Naive thymus-derived CD4-positive, alpha-beta T cell (primary cell): ENCODE measurements at regions of chr12 and their contacts with region 1.

Region 1: GRCh38 chr12:53295070-53295890 is at the start of gene PFDN5:
- DNase-seq: peak; percentile 71 to 94 (median 88)
- ATAC-seq: peak; percentile 95
- H3K4me3 ChIP-seq: peak within 1 kb of the TSS; percentile 85
- H3K4me3 Mint-ChIP-seq: peak within 1 kb of the TSS; percentile 91 to 100 (median 98)
- H3K27ac ChIP-seq: peak within 1 kb of the TSS; percentile 94
- H3K27ac Mint-ChIP-seq: peak within 1 kb of the TSS; percentile 96 to 99 (median 98)
- H3K4me1 ChIP-seq: peaks cover 24 to 28% of the 10 kb centered on the region in 2 donors
- H3K4me1 Mint-ChIP-seq: peaks cover 27 to 62% (median 37%) of the 10 kb centered on the region in 7 donors
- H3K27me3 ChIP-seq: no peaks in the 10 kb centered on the region
- H3K27me3 Mint-ChIP-seq: no peaks in the 10 kb centered on the region
- total RNA-seq, gene PFDN5: 323 to 785 (median 692) TPM

Region 2: DNA sequence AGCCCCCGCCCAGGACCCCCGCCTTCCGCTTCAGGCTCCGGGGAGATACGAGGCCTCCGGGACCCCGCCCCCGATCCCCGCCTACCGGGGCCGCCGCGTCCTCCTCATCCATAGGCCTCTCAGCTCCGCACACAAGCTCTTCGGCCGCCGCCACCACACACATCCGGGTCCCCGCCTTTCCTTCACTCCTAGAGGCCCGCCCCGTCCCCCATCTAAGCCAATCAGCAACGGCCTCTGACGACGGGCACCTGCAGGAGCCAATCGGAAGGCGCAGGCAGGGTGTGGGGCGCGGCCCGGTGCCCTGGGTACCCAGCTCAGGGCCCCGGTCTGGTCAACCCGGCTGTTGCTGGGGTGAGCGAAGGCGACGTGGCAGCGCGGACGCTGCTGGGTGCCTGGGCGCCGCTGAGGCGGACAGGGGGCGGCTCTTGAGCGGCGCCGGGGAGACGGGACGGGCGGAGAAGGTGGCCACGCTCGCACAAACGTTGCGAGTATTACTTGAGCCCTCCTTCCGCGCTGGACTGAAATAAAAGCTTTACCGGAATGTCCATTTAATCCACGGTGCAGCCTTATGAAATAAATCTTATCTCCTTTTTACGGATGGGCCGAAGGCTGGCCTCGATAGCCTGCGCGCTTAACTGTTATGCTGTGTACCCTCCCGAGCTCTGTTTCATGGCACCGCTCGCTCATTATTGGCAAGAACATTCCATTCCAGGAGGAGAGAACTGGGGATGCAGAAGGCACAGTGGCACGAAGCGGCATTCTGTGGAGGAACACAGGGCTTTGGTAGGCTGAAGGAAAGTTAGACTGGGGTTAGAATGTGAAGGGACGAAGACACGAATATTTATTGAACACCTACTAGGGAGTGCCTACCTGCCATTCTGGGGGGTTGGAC is 215.8 kb before region 1 on chr12 and contains the start of gene SPRYD3:
- CTCF ChIA-PET with region 1: no interaction called
- POLR2A ChIA-PET with region 1: interaction called, 6 read pairs
- intact Hi-C with region 1: loop called in 1 of 2 experiments (anchors 2 kb)
- DNase-seq: peak; percentile 96 to 99 (median 97)
- ATAC-seq: peak; percentile 99
- H3K4me3 ChIP-seq: peak within 1 kb of the TSS; percentile 95
- H3K4me3 Mint-ChIP-seq: peak within 1 kb of the TSS; percentile 90 to 98 (median 92)
- H3K27ac ChIP-seq: peak within 1 kb of the TSS; percentile 93
- H3K27ac Mint-ChIP-seq: peak within 1 kb of the TSS; percentile 95 to 98 (median 96)
- H3K4me1 ChIP-seq: peaks cover 10 to 14% of the 10 kb centered on the region in 2 donors
- H3K4me1 Mint-ChIP-seq: peaks cover 26 to 53% (median 40%) of the 10 kb centered on the region in 7 donors
- H3K27me3 ChIP-seq: no peaks in the 10 kb centered on the region
- H3K27me3 Mint-ChIP-seq: peaks cover 0 to 3% (median 0%) of the 10 kb centered on the region in 5 donors
- total RNA-seq, gene SPRYD3: 33.0 to 48.0 (median 36.4) TPM

Region 3: DNA sequence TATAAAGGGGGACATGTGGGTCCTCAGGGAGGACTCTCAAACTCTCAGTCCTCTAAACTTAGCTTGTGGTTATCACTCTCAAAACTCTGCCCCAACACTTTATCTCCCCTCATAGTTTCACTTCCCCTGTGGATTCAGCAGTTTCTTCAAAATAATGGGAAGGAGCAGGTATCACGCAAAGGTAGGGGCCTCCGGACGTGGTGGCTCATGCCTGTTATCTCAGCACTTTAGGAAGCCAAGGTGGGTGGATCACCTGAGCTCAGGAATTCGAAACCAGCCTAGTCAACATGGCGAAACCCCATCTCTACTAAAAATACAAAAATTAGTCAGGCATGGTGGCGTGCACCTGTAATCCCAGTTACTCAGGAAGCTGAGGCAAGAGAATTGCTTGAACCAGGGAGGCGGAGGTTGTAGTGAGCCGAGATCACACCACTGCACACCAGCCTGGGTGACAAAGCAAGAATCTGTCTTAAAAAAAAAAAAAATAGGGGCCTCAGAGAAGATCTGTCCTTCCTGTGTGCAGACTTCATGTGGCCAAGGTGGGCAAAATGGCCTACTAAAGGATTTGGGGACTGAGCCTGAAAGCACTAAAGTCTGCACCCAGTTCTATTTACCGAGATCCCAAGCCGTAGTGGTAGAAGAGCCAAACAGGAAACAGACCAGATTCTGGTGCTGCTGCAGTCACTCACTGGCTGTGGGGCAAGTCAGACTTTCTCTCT is 94.7 kb before region 1 on chr12:
- CTCF ChIA-PET with region 1: no interaction called
- POLR2A ChIA-PET with region 1: interaction called, 17 read pairs
- intact Hi-C with region 1: no loop called
- DNase-seq: peak in 4 of 9 donors; percentile 41 to 46 (median 42)
- ATAC-seq: peak; percentile 29
- H3K4me3 ChIP-seq: peak overlapping the region; percentile 21
- H3K4me3 Mint-ChIP-seq: peak overlapping the region; percentile 65 to 90 (median 76)
- H3K27ac ChIP-seq: peak overlapping the region; percentile 75
- H3K27ac Mint-ChIP-seq: peak overlapping the region; percentile 82 to 95 (median 92)
- H3K4me1 ChIP-seq: peaks cover 70 to 94% of the 10 kb centered on the region in 2 donors
- H3K4me1 Mint-ChIP-seq: peaks cover 56 to 91% (median 74%) of the 10 kb centered on the region in 7 donors
- H3K27me3 ChIP-seq: no peaks in the 10 kb centered on the region
- H3K27me3 Mint-ChIP-seq: no peaks in the 10 kb centered on the region

Region 4: GRCh38 chr12:53251477-53252348 is 43.6 kb before region 1 on chr12:
- CTCF ChIA-PET with region 1: no interaction called
- POLR2A ChIA-PET with region 1: interaction called, 3 read pairs
- intact Hi-C with region 1: loop called in 1 of 2 experiments (anchors 1 kb)
- DNase-seq: peak; percentile 58 to 81 (median 69)
- ATAC-seq: peak; percentile 90
- H3K4me3 ChIP-seq: peak overlapping the region; percentile 95
- H3K4me3 Mint-ChIP-seq: peak overlapping the region; percentile 89 to 98 (median 96)
- H3K27ac ChIP-seq: peak overlapping the region; percentile 95
- H3K27ac Mint-ChIP-seq: peak overlapping the region; percentile 84 to 97 (median 94)
- H3K4me1 ChIP-seq: peaks cover 26 to 38% of the 10 kb centered on the region in 2 donors
- H3K4me1 Mint-ChIP-seq: peaks cover 37 to 59% (median 48%) of the 10 kb centered on the region in 7 donors
- H3K27me3 ChIP-seq: no peaks in the 10 kb centered on the region
- H3K27me3 Mint-ChIP-seq: no peaks in the 10 kb centered on the region

Region 5: GRCh38 chr12:53344824-53345485 is 49.7 kb after region 1 on chr12:
- CTCF ChIA-PET with region 1: interaction called, 4 read pairs
- POLR2A ChIA-PET with region 1: no interaction called
- intact Hi-C with region 1: loop called (anchors 1 to 2 kb)
- DNase-seq: peak; percentile 42 to 68 (median 63)
- ATAC-seq: peak; percentile 89
- H3K4me3 ChIP-seq: peak overlapping the region; percentile 79
- H3K4me3 Mint-ChIP-seq: peak overlapping the region; percentile 91 to 100 (median 97)
- H3K27ac ChIP-seq: peak overlapping the region; percentile 66
- H3K27ac Mint-ChIP-seq: peak overlapping the region; percentile 87 to 96 (median 91)
- H3K4me1 ChIP-seq: peaks cover 0 to 10% of the 10 kb centered on the region in 2 donors
- H3K4me1 Mint-ChIP-seq: peaks cover 11 to 25% (median 17%) of the 10 kb centered on the region in 7 donors
- H3K27me3 ChIP-seq: no peaks in the 10 kb centered on the region
- H3K27me3 Mint-ChIP-seq: peaks cover 0 to 13% (median 0%) of the 10 kb centered on the region in 5 donors

Region 6: GRCh38 chr12:53500776-53501614 is 205.7 kb after region 1 on chr12 and contains the start of gene TARBP2:
- CTCF ChIA-PET with region 1: interaction called, 4 read pairs
- POLR2A ChIA-PET with region 1: interaction called, 13 read pairs
- intact Hi-C with region 1: loop called (anchors 1 kb)
- DNase-seq: peak; percentile 87 to 99 (median 98)
- ATAC-seq: peak; percentile 87
- H3K4me3 ChIP-seq: peak within 1 kb of the TSS; percentile 84
- H3K4me3 Mint-ChIP-seq: peak within 1 kb of the TSS; percentile 86 to 96 (median 92)
- H3K27ac ChIP-seq: peak within 1 kb of the TSS; percentile 98
- H3K27ac Mint-ChIP-seq: peak within 1 kb of the TSS; percentile 87 to 100 (median 97)
- H3K4me1 ChIP-seq: peaks cover 24 to 27% of the 10 kb centered on the region in 2 donors
- H3K4me1 Mint-ChIP-seq: peaks cover 15 to 56% (median 43%) of the 10 kb centered on the region in 7 donors
- H3K27me3 ChIP-seq: no peaks in the 10 kb centered on the region
- H3K27me3 Mint-ChIP-seq: no peaks in the 10 kb centered on the region
- total RNA-seq, gene TARBP2: 25.1 to 45.2 (median 40.7) TPM

Region 7: DNA sequence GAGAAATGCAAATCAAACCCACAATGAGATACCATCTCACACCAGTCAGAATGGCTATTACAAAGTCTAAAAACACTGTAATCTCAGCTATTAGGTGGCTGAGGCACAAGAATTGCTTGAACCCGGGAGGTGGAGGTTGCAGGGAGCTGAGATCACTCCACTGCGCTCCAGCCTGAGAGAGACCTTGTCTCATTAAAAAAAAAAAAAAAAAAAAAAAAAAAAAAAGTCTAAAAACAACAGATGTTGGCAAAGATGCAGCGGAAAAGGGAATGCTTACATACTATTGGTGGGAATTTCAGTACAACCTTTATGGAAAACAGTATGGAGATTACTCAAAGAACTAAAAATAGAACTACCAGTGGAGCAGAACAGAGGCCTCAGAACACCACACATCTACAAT is 349.9 kb after region 1 on chr12:
- CTCF ChIA-PET with region 1: no interaction called
- POLR2A ChIA-PET with region 1: no interaction called
- intact Hi-C with region 1: no loop called
- DNase-seq: no peak
- ATAC-seq: no peak
- H3K4me3 ChIP-seq: no peak overlapping the region
- H3K4me3 Mint-ChIP-seq: no peak overlapping the region
- H3K27ac ChIP-seq: no peak overlapping the region
- H3K27ac Mint-ChIP-seq: no peak overlapping the region
- H3K4me1 ChIP-seq: no peaks in the 10 kb centered on the region
- H3K4me1 Mint-ChIP-seq: peaks cover 0 to 3% (median 0%) of the 10 kb centered on the region in 7 donors
- H3K27me3 ChIP-seq: no peaks in the 10 kb centered on the region
- H3K27me3 Mint-ChIP-seq: peaks cover 0 to 7% (median 0%) of the 10 kb centered on the region in 5 donors